Activated T-helper 2 cell treated with anti-CD3 and anti-CD28 coated beads, Interferon-gamma antibody, Interleukin-2, Interleukin-4, amounts not matched to agents 10 μg/mL and 5 μg/mL and 100 μg/mL, durations not matched to agents 14 hours and 24 hours and 36 hours (primary cell): ENCODE measurements at regions of chr10 and their contacts with region 1.

Region 1: DNA sequence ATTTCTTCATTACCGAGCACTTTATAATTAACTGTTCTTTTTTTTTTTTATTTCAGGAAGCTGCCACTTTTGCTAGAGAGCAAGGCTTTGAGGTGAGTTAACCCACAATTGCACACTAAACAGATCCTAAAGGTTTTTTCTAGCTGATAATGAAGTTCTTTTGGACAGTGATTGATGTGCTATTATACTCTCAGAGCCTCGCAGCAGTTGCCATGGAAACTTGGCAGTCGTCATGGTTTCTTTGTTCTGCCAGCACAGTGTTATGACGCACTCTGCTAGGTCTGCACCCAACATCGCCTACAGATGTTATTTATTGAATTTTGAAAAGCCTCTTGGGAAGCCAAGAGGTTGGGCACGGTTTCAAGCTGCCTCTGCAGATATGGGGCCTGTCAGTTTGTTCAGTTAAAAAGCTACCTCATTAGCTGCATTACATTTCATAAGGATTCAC is 237.2 kb upstream of the KAT6B start:
- DNase-seq: peak; percentile 77
- H3K4me3 Mint-ChIP-seq: no peak overlapping the region
- H3K27ac Mint-ChIP-seq: peak overlapping the region; percentile 71
- H3K4me1 Mint-ChIP-seq: peaks cover 68% of the 10 kb centered on the region
- H3K27me3 Mint-ChIP-seq: no peaks in the 10 kb centered on the region

Region 2: GRCh38 chr10:74363727-74364126 is 225.5 kb before region 1 on chr10:
- intact Hi-C with region 1: loop called (anchors 2 kb)
- DNase-seq: no peak
- H3K4me3 Mint-ChIP-seq: no peak overlapping the region
- H3K27ac Mint-ChIP-seq: no peak overlapping the region
- H3K4me1 Mint-ChIP-seq: peaks cover 24% of the 10 kb centered on the region
- H3K27me3 Mint-ChIP-seq: no peaks in the 10 kb centered on the region

Region 3: DNA sequence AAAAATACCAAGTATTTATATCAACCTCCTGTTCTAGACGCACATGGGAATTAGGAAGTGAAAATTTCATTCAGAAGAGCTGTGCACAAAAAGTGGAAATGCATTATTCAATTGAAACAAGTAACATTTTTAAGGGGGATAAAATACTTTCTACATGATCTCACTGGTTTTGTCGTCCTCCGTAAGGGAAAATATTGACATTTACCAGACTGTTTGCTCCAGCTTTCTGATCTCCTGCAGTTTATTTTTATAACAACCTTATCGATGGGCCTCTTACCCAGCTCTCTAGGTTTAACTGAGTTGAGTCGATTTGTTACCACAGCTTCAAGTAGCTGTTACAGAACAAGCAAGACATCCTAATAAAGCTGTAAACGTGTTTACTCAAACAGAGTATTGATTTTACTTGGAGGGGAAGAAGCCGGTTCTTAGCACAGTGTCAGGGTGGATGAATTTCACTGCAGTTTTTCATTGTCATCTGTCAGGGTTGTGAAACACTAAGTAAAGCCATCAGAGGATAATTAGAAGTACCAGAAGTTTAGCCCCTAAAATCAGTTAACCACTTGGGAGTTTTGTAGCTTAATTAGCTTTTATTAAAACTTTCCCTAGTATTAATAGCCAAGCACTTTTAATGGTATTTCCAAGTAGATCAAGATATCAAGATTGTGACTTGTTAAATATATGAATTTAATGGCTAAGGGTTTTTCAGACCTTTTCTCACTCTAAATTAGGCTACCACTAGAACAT is 94.5 kb after region 1 on chr10:
- intact Hi-C with region 1: loop called (anchors 5 kb)
- DNase-seq: no peak
- H3K4me3 Mint-ChIP-seq: no peak overlapping the region
- H3K27ac Mint-ChIP-seq: no peak overlapping the region
- H3K4me1 Mint-ChIP-seq: peaks cover 13% of the 10 kb centered on the region
- H3K27me3 Mint-ChIP-seq: no peaks in the 10 kb centered on the region

Region 4: DNA sequence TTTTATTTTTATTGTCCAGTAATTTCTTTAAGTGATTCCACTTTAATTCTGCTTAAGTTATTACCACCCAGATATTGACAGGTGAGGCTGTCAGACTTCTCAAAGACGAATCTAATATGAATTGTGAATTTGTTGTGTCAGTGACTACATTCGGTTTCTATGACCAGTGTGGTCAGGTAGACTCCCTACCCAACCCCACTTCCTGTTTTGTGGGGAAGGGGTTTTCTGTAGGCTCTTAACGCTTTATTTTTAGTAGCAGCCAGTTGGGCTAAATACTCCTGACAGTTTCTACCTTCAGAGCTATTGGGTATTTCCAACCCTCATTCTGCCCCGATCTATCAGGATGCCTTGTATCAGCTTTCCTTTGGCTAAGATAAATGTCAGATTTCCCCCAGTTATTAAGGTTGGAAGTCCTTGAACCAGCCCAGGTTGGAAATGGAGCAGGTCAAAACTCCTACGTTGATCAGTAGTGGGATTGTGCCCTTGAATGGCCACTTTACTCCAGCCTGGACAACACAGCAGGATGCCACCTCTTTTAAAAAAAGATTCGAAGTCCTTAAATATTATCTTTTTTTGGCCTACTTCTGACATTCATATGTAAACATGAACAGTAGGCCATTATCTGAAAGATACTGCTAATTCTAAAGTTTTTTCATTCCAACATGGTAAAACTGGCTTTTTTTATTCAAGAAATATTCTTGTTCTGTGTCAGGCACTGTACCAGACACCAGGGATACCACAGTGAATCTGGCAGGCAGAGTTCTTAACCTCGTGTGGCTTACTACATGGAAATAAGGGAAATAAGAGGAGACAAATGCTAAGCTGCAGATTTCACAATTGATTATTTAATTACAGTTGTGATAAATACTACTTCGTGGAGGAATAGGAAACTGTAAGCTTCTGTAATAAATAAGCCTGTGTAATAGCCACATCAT is 388.9 kb after region 1 on chr10:
- intact Hi-C with region 1: loop called (anchors 1 kb)
- DNase-seq: peak; percentile 60
- H3K4me3 Mint-ChIP-seq: peak overlapping the region; percentile 37
- H3K27ac Mint-ChIP-seq: peak overlapping the region; percentile 74
- H3K4me1 Mint-ChIP-seq: peaks cover 49% of the 10 kb centered on the region
- H3K27me3 Mint-ChIP-seq: no peaks in the 10 kb centered on the region

Region 5: GRCh38 chr10:75210282-75211006 is 621.2 kb after region 1 on chr10 and contains the start of gene VDAC2:
- intact Hi-C with region 1: loop called (anchors 5 kb)
- DNase-seq: peak; percentile 95
- H3K4me3 Mint-ChIP-seq: peak within 1 kb of the TSS; percentile 97
- H3K27ac Mint-ChIP-seq: peak within 1 kb of the TSS; percentile 100
- H3K4me1 Mint-ChIP-seq: peaks cover 32% of the 10 kb centered on the region
- H3K27me3 Mint-ChIP-seq: no peaks in the 10 kb centered on the region
- total RNA-seq, gene VDAC2: 219 and 221 TPM in 2 replicates